ENCODE measurements at regions of chr12 and their contacts with region 1.

Region 1: DNA sequence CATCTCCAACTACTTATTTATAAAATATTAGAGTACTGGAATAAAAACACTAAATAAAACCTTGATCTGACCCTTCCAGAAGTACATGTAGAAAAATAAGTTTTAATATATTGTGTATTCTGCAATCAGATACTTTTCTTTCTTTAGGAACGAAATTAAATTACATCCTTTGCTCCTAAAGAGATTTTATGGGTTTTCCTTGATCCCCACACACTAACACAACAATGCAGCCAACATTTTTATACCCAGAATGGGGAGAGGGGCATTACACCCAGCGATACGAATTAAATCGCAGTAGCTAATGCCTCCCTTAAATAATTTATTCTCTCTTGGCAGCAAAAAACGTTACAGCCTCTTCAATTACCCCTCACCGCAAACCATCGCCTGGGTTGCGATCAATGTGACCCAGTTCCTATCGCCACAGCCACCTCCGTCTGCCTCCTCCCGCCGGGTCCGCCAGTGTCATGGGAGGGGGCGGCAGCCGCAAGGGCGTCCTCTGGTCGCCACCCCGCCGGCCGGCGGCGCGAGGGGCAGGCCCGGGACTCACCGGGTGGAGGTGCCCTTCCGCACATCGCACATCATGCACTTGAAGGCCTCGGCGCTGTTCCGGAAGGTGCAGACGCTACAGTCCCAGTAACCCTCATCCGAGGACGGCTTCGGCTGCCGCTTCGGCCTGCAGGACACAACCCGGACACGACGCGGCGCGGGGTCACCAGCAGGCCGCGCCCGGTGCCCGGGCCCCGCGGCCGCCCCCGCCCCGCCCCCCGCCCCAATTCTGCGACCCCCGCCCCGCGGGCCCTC is 796 bp downstream of the YAF2 start:
- DNase-seq: peak; percentile 67
- ATAC-seq: peak; percentile 84
- H3K4me3 ChIP-seq: peak overlapping the region; percentile 82 to 92 (median 90)
- H3K27ac ChIP-seq: peak overlapping the region; percentile 68
- H3K4me1 ChIP-seq: peaks cover 41% of the 10 kb centered on the region
- H3K27me3 ChIP-seq: no peaks in the 10 kb centered on the region; a peak in 1 of 5 replicates
- CTCF ChIP-seq: peak; percentile 67
- EP300 ChIP-seq: peak in 1 of 2 experiments; percentile 45; a peak in 1 of 4 replicates
- POLR2A ChIP-seq: peak; percentile 23 to 56; a peak in 2 of 4 replicates
- RAD21 ChIP-seq: peak; percentile 48

Region 2: DNA sequence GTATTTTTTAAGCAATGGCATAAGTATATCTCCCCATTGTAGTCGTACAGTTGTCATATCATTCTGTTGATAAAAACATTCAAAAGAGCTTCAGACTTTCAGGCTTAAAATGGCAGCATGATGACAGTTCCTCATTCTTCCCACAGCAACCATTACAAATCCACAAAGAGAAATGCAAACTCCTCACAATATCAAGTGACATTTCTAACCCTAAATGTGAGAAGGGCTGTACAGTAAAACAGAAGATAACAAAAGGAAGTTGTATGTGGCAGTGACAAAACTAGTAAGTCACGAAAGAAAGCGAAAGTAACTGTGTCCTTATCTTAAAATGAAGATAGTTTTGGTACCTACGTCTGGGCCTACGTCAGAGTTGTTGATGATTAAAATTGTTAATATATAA is 139.3 kb before region 1 on chr12:
- CTCF ChIA-PET with region 1: no interaction called
- POLR2A ChIA-PET with region 1: no interaction called
- in situ Hi-C with region 1: no loop called
- intact Hi-C with region 1: no loop called
- DNase-seq: no peak
- ATAC-seq: no peak
- H3K4me3 ChIP-seq: no peak overlapping the region
- H3K27ac ChIP-seq: no peak overlapping the region
- H3K4me1 ChIP-seq: no peaks in the 10 kb centered on the region
- H3K27me3 ChIP-seq: no peaks in the 10 kb centered on the region; a peak in 1 of 5 replicates
- CTCF ChIP-seq: no peak
- EP300 ChIP-seq: no peak
- POLR2A ChIP-seq: no peak
- RAD21 ChIP-seq: no peak

Region 3: DNA sequence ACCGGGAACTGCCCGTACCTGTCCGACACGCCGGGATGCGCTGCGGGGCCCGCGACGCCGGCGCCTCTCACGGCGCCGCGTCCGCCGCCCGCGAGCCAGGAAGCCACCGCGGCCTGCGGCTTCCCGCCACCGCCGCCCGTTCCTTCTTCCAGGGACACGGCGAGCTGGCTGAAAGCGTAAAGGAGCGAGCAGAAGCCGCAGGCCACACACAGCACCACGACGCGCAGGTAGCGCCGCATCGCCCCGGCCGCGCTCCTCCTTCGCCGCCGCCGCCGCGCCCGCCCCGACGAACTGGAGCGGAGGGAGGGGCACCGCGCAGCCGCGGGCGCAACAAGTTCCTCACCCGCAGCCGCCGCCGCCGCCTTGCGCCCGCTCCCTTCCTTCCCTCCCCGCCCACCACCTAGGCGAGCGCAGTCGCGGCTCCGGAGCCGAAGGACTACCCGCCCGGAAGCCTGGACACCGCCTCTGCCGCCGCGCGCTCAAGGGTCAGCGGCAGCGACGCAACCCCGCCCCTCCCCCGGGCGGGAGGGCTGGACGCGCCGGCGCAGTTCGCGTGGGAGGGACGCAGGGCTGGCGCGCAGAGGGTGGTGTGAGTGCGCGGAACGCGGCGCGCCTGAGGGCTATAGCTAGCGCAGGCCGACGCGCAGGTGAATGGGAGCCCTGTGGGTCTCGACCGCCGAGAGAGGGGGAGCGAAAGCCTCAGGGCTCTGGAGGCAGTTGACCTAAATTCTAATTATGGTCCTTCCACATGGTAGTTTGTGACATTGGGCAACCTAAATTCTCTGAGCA is 92.7 kb before region 1 on chr12 and contains the start of gene GXYLT1:
- CTCF ChIA-PET with region 1: no interaction called
- POLR2A ChIA-PET with region 1: interaction called, 4 read pairs
- in situ Hi-C with region 1: no loop called
- intact Hi-C with region 1: loop called (anchors 5 kb)
- DNase-seq: peak; percentile 79
- ATAC-seq: peak; percentile 94
- H3K4me3 ChIP-seq: peak within 1 kb of the TSS; percentile 79 to 85 (median 83)
- H3K27ac ChIP-seq: peak within 1 kb of the TSS; percentile 80
- H3K4me1 ChIP-seq: peaks cover 49% of the 10 kb centered on the region
- H3K27me3 ChIP-seq: no peaks in the 10 kb centered on the region
- CTCF ChIP-seq: no peak; the same call in 1 of the 2 replicates
- EP300 ChIP-seq: no peak
- POLR2A ChIP-seq: peak; percentile 78 to 79
- RAD21 ChIP-seq: no peak; the same call in 1 of the 2 replicates
- total RNA-seq, gene GXYLT1: 12.8 and 17.0 TPM in 2 replicates

Region 4: GRCh38 chr12:42213023-42213422 is 24.2 kb before region 1 on chr12:
- CTCF ChIA-PET with region 1: no interaction called
- POLR2A ChIA-PET with region 1: no interaction called
- in situ Hi-C with region 1: no loop called
- intact Hi-C with region 1: loop called (anchors 1 kb)
- DNase-seq: no peak
- ATAC-seq: no peak
- H3K4me3 ChIP-seq: no peak overlapping the region
- H3K27ac ChIP-seq: no peak overlapping the region
- H3K4me1 ChIP-seq: peaks cover 9% of the 10 kb centered on the region; the same call in 1 of the 2 replicates
- H3K27me3 ChIP-seq: no peaks in the 10 kb centered on the region
- CTCF ChIP-seq: no peak
- EP300 ChIP-seq: no peak
- POLR2A ChIP-seq: no peak
- RAD21 ChIP-seq: no peak

Region 5: DNA sequence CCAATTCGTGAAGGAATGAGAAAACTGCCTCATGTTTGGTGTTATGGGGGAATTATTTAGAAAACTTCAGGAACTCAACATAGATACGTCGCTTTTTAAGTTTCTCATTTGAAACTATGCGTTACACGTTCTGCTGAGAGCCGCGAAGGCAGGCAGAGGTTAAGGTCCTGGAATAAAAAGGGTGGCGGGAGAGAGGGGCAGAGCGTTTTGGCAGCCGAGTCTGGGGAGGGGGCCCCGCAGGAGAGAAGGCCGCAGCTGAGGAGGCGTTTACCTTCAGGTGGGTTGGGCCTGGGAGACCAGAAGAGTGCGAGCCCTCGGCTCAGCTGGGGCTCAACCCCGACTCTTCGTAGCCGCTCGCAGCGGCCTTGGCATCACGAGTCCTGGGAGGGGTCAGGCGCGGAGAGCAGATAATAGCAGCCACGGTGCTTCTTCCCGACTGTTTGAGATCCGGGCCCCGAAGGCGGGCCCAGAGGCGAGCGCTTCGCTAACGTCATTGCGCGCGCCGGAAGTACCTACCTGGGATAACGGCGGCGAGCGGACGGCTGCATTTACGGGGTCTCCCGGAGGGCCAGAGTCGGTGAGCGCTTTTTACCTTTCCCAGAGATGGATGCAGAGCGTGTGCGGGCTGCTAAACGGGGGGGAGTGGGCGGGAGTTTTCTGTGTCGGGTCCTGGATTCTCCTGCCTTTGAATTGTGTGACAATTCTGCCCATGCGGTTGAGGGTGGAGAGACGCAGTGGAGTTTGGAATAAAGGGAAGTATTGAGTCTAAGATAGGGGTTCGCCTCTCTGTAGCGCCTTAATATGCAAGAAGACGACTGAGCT is 88.6 kb after region 1 on chr12 and contains the starts of genes PPHLN1 and ZCRB1:
- CTCF ChIA-PET with region 1: no interaction called
- POLR2A ChIA-PET with region 1: no interaction called
- in situ Hi-C with region 1: no loop called
- intact Hi-C with region 1: loop called (anchors 1 kb)
- DNase-seq: peak; percentile 83
- ATAC-seq: peak; percentile 97
- H3K4me3 ChIP-seq: peak within 1 kb of the TSS; percentile 81 to 98 (median 92)
- H3K27ac ChIP-seq: peak within 1 kb of the TSS; percentile 88
- H3K4me1 ChIP-seq: peaks cover 51% of the 10 kb centered on the region
- H3K27me3 ChIP-seq: peaks cover 0 to 3% of the 10 kb centered on the region in 2 experiments; a peak in 1 of 5 replicates
- CTCF ChIP-seq: no peak
- EP300 ChIP-seq: no peak
- POLR2A ChIP-seq: peak; percentile 86 to 88
- RAD21 ChIP-seq: peak; percentile 37; the same call in 1 of the 2 replicates
- total RNA-seq, gene PPHLN1: 66.0 and 84.1 TPM in 2 replicates
- total RNA-seq, gene ZCRB1: 49.8 and 76.2 TPM in 2 replicates